Activated CD8-positive, alpha-beta T cell treated with anti-CD3 and anti-CD28 coated beads, Interleukin-2, amount 10 ng/mL, durations not matched to agents 7 days and 5 days (primary cell): ENCODE measurements at regions of chr3 and their contacts with region 1.

Region 1: GRCh38 chr3:30693470-30694120 is 87.2 kb downstream of the TGFBR2 start:
- DNase-seq: peak; percentile 60
- ATAC-seq: peak; percentile 88
- H3K4me3 Mint-ChIP-seq: no peak overlapping the region
- H3K27ac Mint-ChIP-seq: peak overlapping the region; percentile 54
- H3K4me1 Mint-ChIP-seq: peaks cover 50% of the 10 kb centered on the region
- H3K27me3 Mint-ChIP-seq: no peaks in the 10 kb centered on the region

Region 2: DNA sequence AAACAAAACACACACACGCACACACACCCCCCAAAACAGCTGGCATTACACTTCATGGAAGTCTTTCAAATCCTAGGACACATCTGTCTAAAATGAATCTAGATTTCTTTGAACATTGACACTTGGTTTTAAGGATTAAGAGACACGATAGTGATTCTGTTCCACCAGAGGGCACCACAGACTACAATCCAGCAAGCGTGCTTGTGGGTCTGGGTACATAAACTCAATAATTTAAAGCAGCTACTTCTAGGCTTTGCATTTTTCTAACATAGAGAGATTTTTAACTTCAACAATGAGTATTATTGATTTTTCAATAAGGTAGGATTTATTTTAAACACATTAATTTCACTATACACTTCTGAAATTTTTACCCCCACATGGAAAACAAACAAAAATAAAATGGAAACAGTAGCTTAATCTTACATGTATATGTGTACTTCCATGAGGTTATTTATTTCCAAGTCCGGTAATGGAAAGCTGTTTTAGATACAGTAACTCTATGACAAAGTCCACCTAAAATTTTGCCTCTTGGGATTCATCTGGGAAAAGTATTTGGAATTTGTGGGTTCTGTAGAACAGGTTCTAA is 651.2 kb before region 1 on chr3:
- CTCF ChIA-PET with region 1: interaction called, 21 read pairs
- POLR2A ChIA-PET with region 1: no interaction called
- DNase-seq: peak; percentile 75
- ATAC-seq: peak; percentile 67
- H3K4me3 Mint-ChIP-seq: no peak overlapping the region
- H3K27ac Mint-ChIP-seq: no peak overlapping the region
- H3K4me1 Mint-ChIP-seq: no peaks in the 10 kb centered on the region
- H3K27me3 Mint-ChIP-seq: peaks cover 15% of the 10 kb centered on the region

Region 3: DNA sequence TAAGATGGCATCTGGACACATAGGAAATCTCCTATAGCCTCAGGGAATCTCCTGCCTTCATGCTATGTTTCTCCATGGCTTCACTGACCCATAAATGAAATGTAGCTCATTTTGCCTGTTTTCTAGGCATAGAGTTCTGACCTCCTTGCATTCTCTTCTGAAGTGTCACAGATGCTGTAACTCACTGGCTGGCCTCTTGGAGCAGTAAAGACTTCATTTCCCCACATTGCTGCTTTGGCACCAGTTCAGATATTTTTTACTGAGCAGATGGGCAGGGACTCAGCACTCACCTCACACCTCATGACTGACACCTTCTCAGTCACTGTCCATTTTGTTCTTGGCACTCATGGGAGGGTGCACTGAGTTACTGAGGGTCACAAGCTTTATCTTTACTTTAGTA is 373.9 kb before region 1 on chr3:
- CTCF ChIA-PET with region 1: interaction called, 13 read pairs
- POLR2A ChIA-PET with region 1: no interaction called
- DNase-seq: peak; percentile 36
- ATAC-seq: peak; percentile 68
- H3K4me3 Mint-ChIP-seq: no peak overlapping the region
- H3K27ac Mint-ChIP-seq: no peak overlapping the region
- H3K4me1 Mint-ChIP-seq: peaks cover 2% of the 10 kb centered on the region
- H3K27me3 Mint-ChIP-seq: no peaks in the 10 kb centered on the region

Region 4: DNA sequence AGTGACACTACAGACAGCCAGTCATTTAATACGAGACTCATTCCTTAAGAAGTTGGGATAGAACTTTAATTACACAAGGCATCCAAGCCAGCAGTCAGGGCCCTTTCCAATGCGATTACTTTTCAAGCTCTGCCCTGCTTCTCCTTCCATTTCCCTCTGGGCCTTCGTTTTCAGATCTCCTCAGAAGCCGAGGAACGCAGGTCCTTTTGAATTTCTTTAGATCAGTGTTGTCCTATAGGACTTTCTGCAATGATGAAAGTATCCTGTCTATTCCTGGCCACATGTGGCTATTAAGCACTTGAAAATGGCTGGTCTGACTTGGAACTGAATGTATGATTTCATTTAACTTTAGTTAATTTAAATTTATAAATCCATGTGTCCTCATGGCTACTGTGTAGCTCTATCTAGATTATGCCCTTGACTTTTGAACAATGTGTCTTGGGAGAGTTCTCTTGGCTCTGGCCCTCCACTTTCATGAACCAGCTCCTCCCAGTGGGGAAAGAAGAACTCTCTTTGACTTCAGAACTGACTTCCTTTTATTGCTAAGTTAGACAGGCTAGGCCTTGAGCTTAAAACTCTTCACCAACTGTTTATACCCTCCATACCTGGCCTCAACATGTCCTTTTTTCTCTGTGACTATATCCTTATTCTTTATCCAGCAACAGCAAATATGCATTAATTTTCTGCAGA is 64.5 kb before region 1 on chr3:
- CTCF ChIA-PET with region 1: interaction called, 16 read pairs
- POLR2A ChIA-PET with region 1: no interaction called
- DNase-seq: peak; percentile 53
- ATAC-seq: peak; percentile 41
- H3K4me3 Mint-ChIP-seq: peak overlapping the region; percentile 25
- H3K27ac Mint-ChIP-seq: peak overlapping the region; percentile 79
- H3K4me1 Mint-ChIP-seq: peaks cover 90% of the 10 kb centered on the region
- H3K27me3 Mint-ChIP-seq: no peaks in the 10 kb centered on the region

Region 5: DNA sequence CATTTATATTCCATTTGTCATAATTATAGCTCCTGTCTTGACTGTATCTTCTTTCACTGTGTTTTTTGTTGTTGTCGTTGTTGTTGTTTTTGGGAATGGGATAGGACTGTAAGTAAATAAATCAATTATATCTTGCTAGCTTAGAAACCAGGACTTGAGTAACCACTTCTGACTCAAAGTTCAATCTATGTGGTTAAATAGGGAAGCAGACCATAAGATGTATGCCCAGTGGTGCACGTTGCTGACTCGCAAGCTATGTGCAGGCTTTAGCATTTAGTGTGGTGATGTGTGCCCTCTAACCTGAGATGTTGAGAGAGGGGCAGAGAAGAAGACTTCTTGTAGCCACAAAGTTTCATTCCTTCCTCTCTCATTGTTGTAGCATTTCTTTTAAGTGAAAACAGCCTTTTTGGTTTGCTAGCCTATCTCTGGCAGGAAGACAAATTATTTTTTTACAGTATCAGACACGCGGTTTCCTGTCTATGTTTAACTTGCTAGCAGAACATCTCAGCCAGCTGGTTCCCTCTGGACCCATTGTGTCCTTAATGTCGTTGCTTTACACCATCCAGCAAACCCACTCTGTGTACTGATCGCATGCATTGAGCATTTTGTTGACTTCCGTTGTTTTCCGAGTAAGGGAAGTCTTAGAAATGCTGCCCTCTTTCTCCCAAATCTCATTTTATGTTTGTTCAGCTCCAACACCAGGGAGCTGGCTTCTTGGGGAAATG is 35.1 kb before region 1 on chr3:
- CTCF ChIA-PET with region 1: interaction called, 13 read pairs
- POLR2A ChIA-PET with region 1: interaction called, 3 read pairs
- DNase-seq: peak; percentile 70
- ATAC-seq: peak; percentile 72
- H3K4me3 Mint-ChIP-seq: peak overlapping the region; percentile 45
- H3K27ac Mint-ChIP-seq: peak overlapping the region; percentile 93
- H3K4me1 Mint-ChIP-seq: peaks cover 99% of the 10 kb centered on the region
- H3K27me3 Mint-ChIP-seq: no peaks in the 10 kb centered on the region

Region 6: DNA sequence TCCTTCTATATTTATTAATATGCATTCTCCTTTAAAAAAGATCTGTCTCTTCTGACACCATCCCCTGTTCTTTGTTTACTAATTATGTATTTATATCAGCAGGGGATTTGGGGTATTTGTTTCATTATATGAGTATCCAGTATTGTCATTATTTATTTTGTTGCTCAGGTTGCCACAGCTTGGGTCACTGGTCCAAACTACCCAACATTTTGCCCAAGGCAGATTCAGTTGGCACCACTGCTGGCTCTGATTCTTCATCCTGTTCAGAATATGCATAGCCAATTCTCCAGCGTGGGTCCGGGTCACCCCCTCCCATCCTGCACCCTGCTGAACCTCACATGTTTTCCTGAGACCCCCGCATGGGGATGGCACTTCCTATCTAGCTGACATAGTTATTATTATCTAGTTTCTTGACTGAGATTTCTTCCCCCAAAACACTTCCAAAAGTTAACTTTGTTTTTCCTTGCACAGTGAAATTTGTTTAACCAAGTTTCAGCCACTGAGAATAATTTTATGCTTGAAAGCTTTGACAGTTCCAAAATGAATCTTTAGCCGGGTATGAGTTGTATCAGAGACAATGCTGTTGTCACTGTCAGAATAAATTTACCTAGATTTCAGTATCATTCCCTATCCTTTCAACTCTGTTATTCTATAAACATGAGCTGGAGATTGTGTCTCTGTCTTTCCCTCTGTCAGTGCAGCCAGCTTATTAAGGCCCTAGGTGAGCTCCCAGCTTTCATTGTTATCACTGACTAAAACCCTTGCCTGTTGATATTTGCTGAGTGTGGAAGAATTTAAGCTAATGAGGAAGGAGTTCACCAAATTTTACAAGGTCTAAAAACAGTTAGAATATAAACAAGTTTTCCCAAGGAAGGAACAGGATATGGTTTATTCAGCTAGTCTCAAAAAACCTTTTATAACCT is 16.9 kb before region 1 on chr3:
- CTCF ChIA-PET with region 1: interaction called, 19 read pairs
- POLR2A ChIA-PET with region 1: no interaction called
- DNase-seq: no peak
- ATAC-seq: no peak
- H3K4me3 Mint-ChIP-seq: no peak overlapping the region
- H3K27ac Mint-ChIP-seq: peak overlapping the region; percentile 50
- H3K4me1 Mint-ChIP-seq: peaks cover 81% of the 10 kb centered on the region
- H3K27me3 Mint-ChIP-seq: no peaks in the 10 kb centered on the region

Region 7: GRCh38 chr3:30751610-30752299 is 58.2 kb after region 1 on chr3:
- CTCF ChIA-PET with region 1: interaction called, 27 read pairs
- POLR2A ChIA-PET with region 1: no interaction called
- DNase-seq: peak; percentile 70
- ATAC-seq: peak; percentile 79
- H3K4me3 Mint-ChIP-seq: no peak overlapping the region
- H3K27ac Mint-ChIP-seq: no peak overlapping the region
- H3K4me1 Mint-ChIP-seq: peaks cover 13% of the 10 kb centered on the region
- H3K27me3 Mint-ChIP-seq: no peaks in the 10 kb centered on the region